Dorsolateral prefrontal cortex (tissue), 120 donors: ENCODE measurements at regions of chr15 and their contacts with region 1.

Region 1: DNA sequence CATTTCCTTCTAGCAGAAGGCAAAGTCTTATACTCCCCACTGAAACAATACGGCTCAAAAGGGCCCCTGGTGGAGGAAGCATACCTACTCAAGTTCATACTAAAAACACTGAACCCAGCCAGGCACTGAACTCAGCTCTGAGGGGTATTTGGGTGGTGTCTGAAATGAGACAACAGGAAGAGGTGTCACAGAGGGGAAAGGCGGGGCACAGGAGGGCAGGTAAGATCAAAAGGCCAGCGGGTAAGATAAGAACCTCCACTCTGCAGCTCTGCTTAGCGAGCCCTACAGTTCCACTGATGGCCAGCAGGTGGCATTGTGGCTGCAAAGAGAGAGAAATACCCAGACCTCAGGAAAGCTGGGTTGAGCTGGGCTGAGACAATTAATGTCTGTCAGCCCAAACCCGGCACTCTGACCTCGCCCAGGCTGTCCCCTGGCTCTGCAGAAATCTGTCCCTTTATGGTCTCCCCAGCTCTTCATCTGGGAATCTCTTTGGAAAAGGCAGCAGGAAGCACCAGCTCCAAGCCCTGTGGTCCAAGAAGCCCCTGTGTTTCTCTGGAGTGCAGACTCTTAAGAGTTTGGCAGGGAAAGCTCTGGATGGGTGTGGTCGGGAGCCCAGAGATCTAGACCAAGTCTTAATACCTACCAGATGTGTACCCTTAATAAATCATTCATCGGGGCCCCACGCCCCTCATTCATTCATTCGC is 8.4 kb downstream of the MFGE8 start:
- DNase-seq: peak; percentile 67 to 90 (median 85)
- H3K4me3 ChIP-seq: no peak overlapping the region
- H3K27ac ChIP-seq: peak overlapping the region in 19 of 59 donors; percentile 1 to 64 (median 44)
- H3K27me3 ChIP-seq: no peaks in the 10 kb centered on the region
- CTCF ChIP-seq: peak; percentile 95 to 100 (median 99)

Region 2: GRCh38 chr15:88476635-88477060 is 428.1 kb before region 1 on chr15:
- intact Hi-C with region 1: loop called in 1 of 2 experiments (anchors 5 kb)
- DNase-seq: peak in 4 of 10 donors; percentile 43 to 72 (median 50)
- H3K4me3 ChIP-seq: peak overlapping the region in 9 of 59 donors; percentile 1 to 23 (median 9)
- H3K27ac ChIP-seq: peak overlapping the region in 55 of 59 donors; percentile 35 to 87 (median 72)
- H3K27me3 ChIP-seq: no peaks in the 10 kb centered on the region
- CTCF ChIP-seq: peak; percentile 55 to 87 (median 74)

Region 3: GRCh38 chr15:88681610-88682221 is 223.1 kb before region 1 on chr15:
- intact Hi-C with region 1: loop called in 1 of 2 experiments (anchors 10 kb)
- DNase-seq: peak in 9 of 10 donors; percentile 55 to 83 (median 65)
- H3K4me3 ChIP-seq: peak overlapping the region in 3 of 59 donors; percentile 4 to 38 (median 24)
- H3K27ac ChIP-seq: peak overlapping the region in 57 of 59 donors; percentile 21 to 91 (median 75)
- H3K27me3 ChIP-seq: no peaks in the 10 kb centered on the region
- CTCF ChIP-seq: peak in 2 of 56 donors; percentile 7 to 8

Region 4: GRCh38 chr15:89003865-89004725 is 99.3 kb after region 1 on chr15:
- intact Hi-C with region 1: loop called in 1 of 2 experiments (anchors 2 kb)
- DNase-seq: peak in 1 of 10 donors; percentile 35
- H3K4me3 ChIP-seq: no peak overlapping the region
- H3K27ac ChIP-seq: no peak overlapping the region
- H3K27me3 ChIP-seq: peaks cover 0 to 4% (median 0%) of the 10 kb centered on the region in 45 donors
- CTCF ChIP-seq: peak in 44 of 56 donors; percentile 9 to 64 (median 38)

Region 5: DNA sequence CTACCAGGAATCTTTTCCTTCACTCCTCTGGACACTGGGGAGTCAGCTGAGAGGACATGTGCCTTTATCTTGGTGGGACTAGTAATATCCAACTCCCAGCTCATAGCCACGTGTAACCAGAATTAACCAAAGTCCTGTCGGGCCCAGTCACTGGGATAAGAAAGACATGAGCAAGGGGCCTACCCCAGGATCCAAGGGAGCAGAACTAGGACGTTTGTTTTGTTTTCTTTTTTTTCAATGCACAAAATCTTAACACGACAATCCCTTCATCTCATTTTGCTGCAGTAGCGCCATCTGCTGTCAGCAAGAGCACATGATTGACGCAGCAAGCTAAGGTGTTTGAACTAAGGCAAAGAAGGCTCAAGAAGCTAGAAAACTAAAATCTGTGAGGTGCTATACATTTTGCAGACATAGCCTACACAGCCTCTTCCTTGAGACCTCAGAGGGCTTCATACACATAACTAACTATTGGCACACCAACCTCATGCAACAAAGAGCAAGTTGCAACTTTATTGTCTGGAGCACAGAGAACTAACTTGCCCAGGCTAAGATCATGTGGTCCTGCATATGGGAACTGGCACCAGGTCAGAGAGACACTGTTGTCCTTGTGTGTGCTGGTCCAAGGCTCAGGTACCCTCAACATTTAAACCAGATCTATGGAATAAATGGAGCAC is 273.0 kb after region 1 on chr15:
- intact Hi-C with region 1: loop called in 1 of 2 experiments (anchors 10 kb)
- DNase-seq: peak in 8 of 10 donors; percentile 40 to 75 (median 65)
- H3K4me3 ChIP-seq: peak overlapping the region in 1 of 59 donors; percentile 12
- H3K27ac ChIP-seq: peak overlapping the region in 48 of 59 donors; percentile 5 to 84 (median 56)
- H3K27me3 ChIP-seq: no peaks in the 10 kb centered on the region
- CTCF ChIP-seq: peak; percentile 80 to 97 (median 93)

Region 6: GRCh38 chr15:89299896-89300295 is 395.1 kb after region 1 on chr15:
- intact Hi-C with region 1: loop called in 1 of 2 experiments (anchors 5 kb)
- DNase-seq: no peak
- H3K4me3 ChIP-seq: no peak overlapping the region
- H3K27ac ChIP-seq: no peak overlapping the region
- H3K27me3 ChIP-seq: no peaks in the 10 kb centered on the region
- CTCF ChIP-seq: peak in 53 of 56 donors; percentile 21 to 73 (median 50)